ENCODE measurements at regions of chr5 and their contacts with region 1.

Region 1: GRCh38 chr5:52657247-52657645 is 130.5 kb upstream of the ITGA1 start:
- DNase-seq: peak; percentile 18
- ATAC-seq: no peak
- H3K4me3 ChIP-seq: no peak overlapping the region
- H3K27ac ChIP-seq: no peak overlapping the region
- H3K4me1 ChIP-seq: no peaks in the 10 kb centered on the region
- H3K27me3 ChIP-seq: no peaks in the 10 kb centered on the region
- CTCF ChIP-seq: peak; percentile 53
- EP300 ChIP-seq: no peak
- POLR2A ChIP-seq: no peak
- RAD21 ChIP-seq: no peak

Region 2: DNA sequence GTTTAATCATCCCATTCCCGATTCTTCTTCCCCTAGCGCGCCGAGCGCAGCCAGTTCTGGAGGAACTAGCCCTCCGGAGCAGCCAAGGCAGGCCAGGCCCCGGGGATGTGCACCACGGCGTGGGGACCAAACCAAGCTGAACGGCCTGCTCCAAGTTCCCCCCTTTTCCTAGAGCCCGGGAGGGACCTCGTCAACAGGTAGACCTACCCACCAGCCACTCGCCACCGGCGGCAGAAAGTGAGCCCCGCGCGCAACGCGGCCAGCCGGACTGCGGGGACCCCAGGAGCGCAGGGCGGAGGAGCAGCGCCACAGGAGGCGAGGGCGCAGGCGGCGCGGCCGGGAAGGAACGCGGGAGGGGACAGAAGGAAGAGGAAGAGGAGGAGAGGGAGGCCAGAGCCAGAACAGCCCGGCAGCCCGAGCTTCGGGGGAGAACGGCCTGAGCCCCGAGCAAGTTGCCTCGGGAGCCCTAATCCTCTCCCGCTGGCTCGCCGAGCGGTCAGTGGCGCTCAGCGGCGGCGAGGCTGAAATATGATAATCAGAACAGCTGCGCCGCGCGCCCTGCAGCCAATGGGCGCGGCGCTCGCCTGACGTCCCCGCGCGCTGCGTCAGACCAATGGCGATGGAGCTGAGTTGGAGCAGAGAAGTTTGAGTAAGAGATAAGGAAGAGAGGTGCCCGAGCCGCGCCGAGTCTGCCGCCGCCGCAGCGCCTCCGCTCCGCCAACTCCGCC is 1274.3 kb before region 1 on chr5 and contains the start of gene ISL1:
- CTCF ChIA-PET with region 1: no interaction called
- POLR2A ChIA-PET with region 1: no interaction called
- in situ Hi-C with region 1: loop called (anchors 25 kb)
- intact Hi-C with region 1: no loop called
- DNase-seq: no peak
- ATAC-seq: peak; percentile 61
- H3K4me3 ChIP-seq: no peak within 1 kb of the TSS
- H3K27ac ChIP-seq: no peak within 1 kb of the TSS
- H3K4me1 ChIP-seq: no peaks in the 10 kb centered on the region
- H3K27me3 ChIP-seq: peaks cover 6 to 56% of the 10 kb centered on the region in 2 experiments; a peak in 4 of 5 replicates
- CTCF ChIP-seq: no peak
- EP300 ChIP-seq: no peak
- POLR2A ChIP-seq: no peak
- RAD21 ChIP-seq: no peak
- total RNA-seq, gene ISL1: not detected in 2 replicates

Region 3: DNA sequence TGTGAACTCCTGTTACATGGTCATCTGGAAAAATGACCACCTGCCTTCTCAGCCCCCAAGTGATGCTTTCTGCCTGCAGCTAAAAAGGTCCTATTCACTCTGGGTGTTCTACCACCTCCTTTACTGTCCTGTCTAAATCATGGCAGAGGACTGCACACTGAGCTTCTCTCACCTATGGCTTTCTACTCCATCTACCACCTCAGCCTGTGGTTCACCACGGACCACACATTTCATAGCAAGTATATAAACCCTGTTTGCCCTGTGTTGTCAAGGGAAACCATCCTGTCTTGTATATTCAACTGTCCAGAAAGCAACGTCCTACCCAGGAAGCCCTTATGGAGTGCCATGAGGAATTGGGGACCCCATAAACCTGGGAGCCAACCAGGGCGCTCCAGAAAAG is 36.9 kb before region 1 on chr5:
- CTCF ChIA-PET with region 1: no interaction called
- POLR2A ChIA-PET with region 1: no interaction called
- in situ Hi-C with region 1: no loop called
- intact Hi-C with region 1: no loop called
- DNase-seq: no peak
- ATAC-seq: no peak
- H3K4me3 ChIP-seq: no peak overlapping the region
- H3K27ac ChIP-seq: no peak overlapping the region
- H3K4me1 ChIP-seq: no peaks in the 10 kb centered on the region
- H3K27me3 ChIP-seq: no peaks in the 10 kb centered on the region
- CTCF ChIP-seq: no peak
- EP300 ChIP-seq: no peak
- POLR2A ChIP-seq: no peak
- RAD21 ChIP-seq: no peak

Region 4: DNA sequence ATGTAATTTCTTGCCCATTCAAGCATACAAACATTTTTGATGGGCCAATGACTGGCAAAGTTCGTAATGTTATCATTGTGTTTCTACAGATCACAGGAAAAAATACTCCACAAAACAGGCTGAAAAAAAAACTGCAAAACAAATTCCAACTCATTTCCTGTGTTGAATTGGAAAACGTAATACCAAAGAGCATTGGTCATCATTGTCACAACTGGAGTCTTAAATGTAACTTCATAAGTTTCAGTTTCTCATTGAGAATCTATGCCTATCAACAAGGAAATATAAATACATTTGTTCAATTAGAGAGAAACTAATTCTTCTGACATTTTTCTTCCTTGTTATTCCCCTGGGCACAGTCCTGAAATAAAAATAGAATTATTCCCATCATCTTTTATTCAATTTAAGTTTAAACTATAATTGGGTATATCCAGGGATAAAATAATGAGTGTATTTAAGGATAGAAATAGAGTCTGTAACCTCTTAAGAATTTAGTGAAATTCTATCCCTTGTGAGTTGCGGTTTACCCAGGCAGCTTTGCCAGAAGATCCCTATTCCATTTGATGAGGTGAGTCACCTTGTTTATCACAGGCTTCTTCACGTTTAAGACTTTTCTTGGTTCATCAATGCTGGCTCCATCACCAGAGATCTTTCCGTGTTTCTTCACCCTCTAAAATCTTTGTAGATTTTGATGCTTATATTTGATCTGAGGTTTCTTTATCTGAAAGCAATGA is 17.7 kb after region 1 on chr5:
- CTCF ChIA-PET with region 1: no interaction called
- POLR2A ChIA-PET with region 1: no interaction called
- in situ Hi-C with region 1: no loop called
- intact Hi-C with region 1: no loop called
- DNase-seq: no peak
- ATAC-seq: no peak
- H3K4me3 ChIP-seq: no peak overlapping the region
- H3K27ac ChIP-seq: no peak overlapping the region
- H3K4me1 ChIP-seq: no peaks in the 10 kb centered on the region
- H3K27me3 ChIP-seq: no peaks in the 10 kb centered on the region
- CTCF ChIP-seq: no peak
- EP300 ChIP-seq: no peak
- POLR2A ChIP-seq: no peak
- RAD21 ChIP-seq: no peak

Measured in HepG2 (cell line).